ENCODE measurements at regions of chr20 and their contacts with region 1.

Region 1: DNA sequence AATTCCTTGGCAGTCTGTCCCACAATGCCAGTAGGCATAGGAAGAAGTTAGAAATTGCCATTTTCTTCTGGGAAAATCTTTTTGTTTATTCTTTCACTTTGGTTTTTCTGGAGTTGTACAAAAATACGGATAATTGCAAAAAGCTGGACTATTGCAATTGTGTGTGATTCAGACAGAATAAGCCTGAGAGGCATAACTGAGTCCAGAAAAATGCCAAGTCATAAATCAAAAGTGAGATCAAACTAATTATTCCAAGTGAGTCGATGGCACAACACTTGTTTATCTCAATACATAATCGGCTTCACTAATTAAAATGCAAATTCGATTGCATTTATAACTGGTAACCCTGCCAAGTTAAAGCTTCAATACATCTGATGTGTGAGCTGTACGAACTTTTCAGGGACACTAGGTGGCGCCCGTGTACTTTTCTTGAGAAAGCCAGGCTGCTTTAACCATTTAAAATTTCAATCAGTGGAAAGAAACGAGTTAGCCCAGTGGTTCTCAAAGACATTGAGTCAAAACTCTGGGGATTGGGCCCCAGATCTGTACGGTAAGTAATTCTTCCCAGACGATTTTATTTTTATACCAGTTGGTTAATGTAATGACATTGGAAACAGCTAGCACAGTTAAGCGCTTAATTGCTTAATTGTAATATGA is 102.6 kb downstream of the LAMP5 start:
- DNase-seq: peak; percentile 68
- ATAC-seq: peak; percentile 53 to 77

Region 2: GRCh38 chr20:9458138-9458796 is 158.7 kb before region 1 on chr20:
- intact Hi-C with region 1: no loop called
- DNase-seq: no peak
- ATAC-seq: no peak

Region 3: GRCh38 chr20:9660236-9660868 is 43.4 kb after region 1 on chr20:
- intact Hi-C with region 1: no loop called
- DNase-seq: no peak
- ATAC-seq: no peak

Region 4: DNA sequence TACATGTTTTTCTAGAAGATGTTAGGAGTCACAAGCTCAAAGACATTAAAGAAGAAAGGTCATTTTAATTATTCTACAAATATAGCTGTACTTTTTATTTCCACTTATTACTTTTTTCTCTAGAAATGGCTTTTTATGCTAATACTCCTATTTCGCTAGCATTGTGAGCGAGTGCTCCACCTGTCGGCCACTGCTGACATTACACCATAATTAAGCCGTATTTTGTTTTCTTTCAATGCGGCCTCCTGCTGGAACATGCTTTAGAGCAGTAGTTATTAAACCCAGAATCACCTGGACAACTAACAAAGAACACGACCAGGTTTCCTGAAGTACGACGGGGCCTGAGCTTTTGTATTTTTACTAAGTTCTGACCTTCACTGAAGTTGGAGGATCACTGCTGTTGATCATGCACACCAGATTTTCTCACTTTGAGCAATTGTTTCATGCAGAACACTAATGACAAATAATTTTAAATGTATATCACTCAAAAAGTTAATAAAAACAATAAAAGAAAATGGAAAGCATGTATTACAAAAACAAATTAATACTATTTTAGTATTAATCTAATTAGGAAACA is 296.0 kb after region 1 on chr20:
- intact Hi-C with region 1: loop called (anchors 1 to 10 kb)
- DNase-seq: peak; percentile 31
- ATAC-seq: no peak

Region 5: GRCh38 chr20:11067359-11067758 is 1450.4 kb after region 1 on chr20:
- intact Hi-C with region 1: no loop called
- DNase-seq: no peak
- ATAC-seq: no peak

Measured in left cardiac atrium (tissue), 4 donors.